H1 (cell line): ENCODE measurements at regions of chr20 and their contacts with region 1.

Region 1: GRCh38 chr20:45487231-45487635 is 17.7 kb downstream of the WFDC2 start:
- DNase-seq: peak in 1 of 2 experiments; percentile 77
- H3K4me3 ChIP-seq: peak overlapping the region; percentile 38 to 60 (median 43)
- H3K27ac ChIP-seq: no peak overlapping the region
- H3K4me1 ChIP-seq: peaks cover 0 to 11% (median 0%) of the 10 kb centered on the region in 4 experiments; a peak in 2 of 7 replicates
- H3K27me3 ChIP-seq: no peaks in the 10 kb centered on the region
- CTCF ChIP-seq: peak; percentile 26 to 46 (median 46); a peak in 3 of 4 replicates
- EP300 ChIP-seq: no peak
- POLR2A ChIP-seq: no peak
- RAD21 ChIP-seq: peak; percentile 37 to 46

Region 2: DNA sequence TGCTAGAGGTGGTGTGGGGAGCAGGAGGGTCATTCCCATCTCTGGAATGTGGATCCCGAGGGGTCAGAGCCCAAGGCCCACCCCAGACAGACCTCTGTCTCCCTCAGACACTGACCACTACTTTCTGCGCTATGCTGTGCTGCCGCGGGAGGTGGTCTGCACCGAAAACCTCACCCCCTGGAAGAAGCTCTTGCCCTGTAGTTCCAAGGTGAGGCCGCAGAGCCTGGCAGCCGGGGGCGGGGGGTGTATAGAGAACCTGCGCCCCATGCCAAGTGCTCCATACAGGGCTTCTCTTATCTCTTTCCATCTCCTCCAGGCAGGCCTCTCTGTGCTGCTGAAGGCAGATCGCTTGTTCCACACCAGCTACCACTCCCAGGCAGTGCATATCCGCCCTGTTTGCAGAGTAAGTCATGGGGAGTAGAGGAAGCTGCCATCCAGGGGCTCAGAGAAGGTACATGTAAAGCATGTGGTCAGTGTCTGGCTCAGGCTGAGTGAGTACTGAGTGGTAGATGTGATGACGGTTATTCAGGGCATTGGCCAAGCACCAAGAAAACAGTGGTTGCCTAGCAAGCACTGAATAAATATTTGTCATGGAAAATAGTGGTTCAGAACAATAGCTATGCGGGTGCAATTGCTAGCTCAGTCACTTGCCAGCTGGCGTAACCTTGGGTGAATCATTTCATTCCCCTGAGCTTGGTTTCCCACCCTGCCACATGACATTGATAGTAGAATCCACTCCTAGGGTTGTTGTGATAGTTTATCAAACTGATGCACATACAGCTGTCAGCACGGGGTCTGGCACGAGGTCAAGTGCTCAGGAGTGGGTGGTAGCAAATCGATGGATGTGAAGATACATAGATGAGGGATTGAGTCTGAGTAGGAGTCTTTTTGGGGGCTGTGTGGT is 67.8 kb before region 1 on chr20:
- CTCF ChIA-PET with region 1: no interaction called
- POLR2A ChIA-PET with region 1: no interaction called
- DNase-seq: peak in 1 of 2 experiments; percentile 20
- H3K4me3 ChIP-seq: no peak overlapping the region
- H3K27ac ChIP-seq: no peak overlapping the region
- H3K4me1 ChIP-seq: peaks cover 0 to 5% (median 2%) of the 10 kb centered on the region in 4 experiments; a peak in 3 of 7 replicates
- H3K27me3 ChIP-seq: no peaks in the 10 kb centered on the region
- CTCF ChIP-seq: no peak
- EP300 ChIP-seq: no peak
- POLR2A ChIP-seq: no peak
- RAD21 ChIP-seq: no peak

Region 3: DNA sequence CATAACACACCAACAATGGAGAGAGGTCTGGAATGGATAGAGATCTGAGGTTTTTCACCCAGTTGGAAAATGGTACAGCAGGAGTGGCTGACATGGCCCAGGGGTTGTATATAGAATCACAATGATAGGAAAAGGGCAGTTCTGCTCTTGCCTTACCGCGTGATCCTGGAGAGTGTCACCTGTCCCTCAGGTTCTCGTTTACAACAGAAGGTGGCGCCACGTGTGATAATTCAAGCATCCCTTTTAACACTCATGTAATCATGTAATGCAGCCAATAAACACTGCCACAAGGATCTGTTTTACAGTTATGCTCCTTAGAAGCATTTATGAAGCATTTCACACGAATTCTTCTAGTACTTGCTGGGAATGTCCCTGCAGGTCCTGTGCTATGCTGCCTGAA is 30.6 kb before region 1 on chr20:
- CTCF ChIA-PET with region 1: interaction called, 44 read pairs
- POLR2A ChIA-PET with region 1: no interaction called
- DNase-seq: peak in 1 of 2 experiments; percentile 73
- H3K4me3 ChIP-seq: no peak overlapping the region
- H3K27ac ChIP-seq: no peak overlapping the region
- H3K4me1 ChIP-seq: no peaks in the 10 kb centered on the region; a peak in 1 of 7 replicates
- H3K27me3 ChIP-seq: no peaks in the 10 kb centered on the region
- CTCF ChIP-seq: peak; percentile 58 to 76 (median 63)
- EP300 ChIP-seq: no peak
- POLR2A ChIP-seq: no peak
- RAD21 ChIP-seq: peak; percentile 50 to 64

Region 4: DNA sequence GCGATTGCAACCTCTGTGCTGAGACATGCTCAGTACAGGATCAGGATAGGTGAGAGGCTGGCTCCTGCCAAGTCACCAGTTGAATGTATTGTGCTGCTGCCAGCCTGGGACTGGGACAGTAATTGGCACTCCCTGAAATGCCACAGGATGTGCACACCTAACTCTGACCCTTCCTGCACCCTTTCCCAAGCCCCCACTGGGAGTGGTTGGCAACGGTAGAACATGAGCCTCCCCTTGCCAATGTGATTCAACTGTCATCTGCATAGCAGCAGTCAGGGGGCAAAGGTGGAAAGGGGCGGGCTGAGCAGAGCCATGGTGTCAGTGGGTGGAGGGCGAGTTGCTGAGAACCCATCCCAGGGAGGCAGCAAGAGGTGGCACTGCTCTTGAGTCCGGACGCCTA is 12.8 kb after region 1 on chr20:
- CTCF ChIA-PET with region 1: interaction called, 15 read pairs
- POLR2A ChIA-PET with region 1: no interaction called
- DNase-seq: no peak
- H3K4me3 ChIP-seq: no peak overlapping the region
- H3K27ac ChIP-seq: no peak overlapping the region
- H3K4me1 ChIP-seq: 0 out of 7 replicates have a peak, but pooled peaks cover 0 to 3% (median 0%) of the 10 kb centered on the region in 4 experiments
- H3K27me3 ChIP-seq: no peaks in the 10 kb centered on the region
- CTCF ChIP-seq: no peak
- EP300 ChIP-seq: no peak
- POLR2A ChIP-seq: no peak
- RAD21 ChIP-seq: no peak